Mammary epithelial cell (primary cell): ENCODE measurements at regions of chr17 and their contacts with region 1.

Region 1: DNA sequence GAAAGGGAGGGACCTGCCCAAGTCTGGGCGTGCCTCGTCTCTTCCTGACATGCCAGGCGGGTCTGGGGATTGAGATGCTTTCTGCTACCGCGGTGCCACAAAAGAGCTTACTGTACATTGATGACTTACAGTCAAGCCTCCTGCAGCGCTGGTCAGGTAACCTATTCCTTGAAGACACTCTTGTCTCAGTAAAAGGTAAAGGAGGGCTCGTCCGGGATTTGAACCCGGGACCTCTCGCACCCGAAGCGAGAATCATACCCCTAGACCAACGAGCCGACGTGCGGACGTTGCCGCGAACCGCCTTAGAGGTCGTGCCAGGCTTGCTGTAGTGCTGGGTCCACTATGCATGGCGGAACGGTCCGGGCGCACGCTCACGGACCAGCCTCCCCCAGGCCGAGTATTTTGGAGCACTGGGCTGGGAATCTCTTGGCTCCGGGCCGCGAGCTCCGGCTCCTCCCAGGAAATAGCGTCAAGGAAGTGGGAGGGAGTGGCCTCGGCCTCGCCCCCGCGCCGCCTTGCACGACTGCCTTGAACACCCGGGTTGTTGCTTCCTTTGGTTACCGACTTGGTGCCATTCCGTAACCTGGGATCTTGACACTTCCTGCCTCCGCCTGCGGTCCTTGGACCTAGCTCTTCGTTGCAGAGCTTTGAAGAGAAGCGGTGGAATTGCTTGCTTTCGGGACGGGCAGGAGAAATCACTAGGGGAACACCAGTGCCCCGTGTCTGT is 12.4 kb upstream of the AURKB start:
- DNase-seq: peak; percentile 96
- H3K4me3 ChIP-seq: peak overlapping the region; percentile 53 to 74 (median 60)
- H3K27ac ChIP-seq: peak overlapping the region; percentile 74
- H3K4me1 ChIP-seq: peaks cover 25% of the 10 kb centered on the region
- H3K27me3 ChIP-seq: no peaks in the 10 kb centered on the region
- CTCF ChIP-seq: no peak

Region 2: GRCh38 chr17:8073627-8074484 is 148.9 kb before region 1 on chr17:
- CTCF ChIA-PET with region 1: no interaction called
- dilution Hi-C with region 1: no loop called
- in situ Hi-C with region 1: no loop called
- intact Hi-C with region 1: loop called (anchors 5 kb)
- DNase-seq: peak; percentile 62
- H3K4me3 ChIP-seq: peak overlapping the region in 2 of 3 experiments; percentile 31 to 41
- H3K27ac ChIP-seq: no peak overlapping the region
- H3K4me1 ChIP-seq: peaks cover 15% of the 10 kb centered on the region
- H3K27me3 ChIP-seq: peaks cover 7% of the 10 kb centered on the region
- CTCF ChIP-seq: peak; percentile 84 to 95

Region 3: DNA sequence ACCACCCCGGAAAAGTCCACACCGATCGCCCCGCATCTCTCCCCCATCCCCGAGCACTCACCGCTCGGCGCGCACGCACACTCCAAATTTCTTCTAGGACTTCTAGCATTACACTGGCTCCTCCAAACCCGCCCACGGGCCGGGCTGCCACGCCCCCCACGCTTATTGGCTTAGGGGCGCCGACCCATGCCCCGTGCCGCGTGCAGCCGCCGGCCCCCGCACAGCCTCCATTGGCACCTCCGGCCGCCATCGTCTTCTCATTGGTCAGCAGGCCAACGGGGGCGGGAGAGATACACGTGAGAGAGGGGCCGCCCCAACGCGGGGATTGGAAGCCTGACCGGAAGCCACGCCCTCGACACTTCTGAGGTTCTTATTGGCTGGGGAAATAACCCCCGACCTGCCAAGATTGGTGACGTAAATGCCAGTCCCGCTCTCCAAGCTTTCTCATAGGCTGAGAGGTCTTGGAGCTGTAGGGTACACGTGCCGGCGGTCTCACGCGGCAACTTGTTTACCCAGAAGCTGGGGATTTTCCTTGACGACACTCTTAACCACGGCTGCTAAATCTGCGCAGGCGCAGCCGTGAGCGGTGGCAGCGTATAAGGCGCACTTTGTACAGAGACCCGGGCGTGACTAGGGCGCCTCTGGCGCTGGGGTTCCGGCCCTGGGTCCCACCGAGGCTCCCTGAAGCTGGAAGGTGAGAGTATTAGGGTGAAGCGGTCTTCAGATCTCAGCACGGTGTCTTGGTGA is 66.4 kb before region 1 on chr17:
- CTCF ChIA-PET with region 1: no interaction called
- dilution Hi-C with region 1: no loop called
- in situ Hi-C with region 1: no loop called
- intact Hi-C with region 1: loop called (anchors 1 kb)
- DNase-seq: peak; percentile 100
- H3K4me3 ChIP-seq: peak overlapping the region; percentile 85 to 92 (median 88)
- H3K27ac ChIP-seq: peak overlapping the region; percentile 100
- H3K4me1 ChIP-seq: peaks cover 34% of the 10 kb centered on the region
- H3K27me3 ChIP-seq: no peaks in the 10 kb centered on the region
- CTCF ChIP-seq: peak in 1 of 2 donors; percentile 18

Region 4: DNA sequence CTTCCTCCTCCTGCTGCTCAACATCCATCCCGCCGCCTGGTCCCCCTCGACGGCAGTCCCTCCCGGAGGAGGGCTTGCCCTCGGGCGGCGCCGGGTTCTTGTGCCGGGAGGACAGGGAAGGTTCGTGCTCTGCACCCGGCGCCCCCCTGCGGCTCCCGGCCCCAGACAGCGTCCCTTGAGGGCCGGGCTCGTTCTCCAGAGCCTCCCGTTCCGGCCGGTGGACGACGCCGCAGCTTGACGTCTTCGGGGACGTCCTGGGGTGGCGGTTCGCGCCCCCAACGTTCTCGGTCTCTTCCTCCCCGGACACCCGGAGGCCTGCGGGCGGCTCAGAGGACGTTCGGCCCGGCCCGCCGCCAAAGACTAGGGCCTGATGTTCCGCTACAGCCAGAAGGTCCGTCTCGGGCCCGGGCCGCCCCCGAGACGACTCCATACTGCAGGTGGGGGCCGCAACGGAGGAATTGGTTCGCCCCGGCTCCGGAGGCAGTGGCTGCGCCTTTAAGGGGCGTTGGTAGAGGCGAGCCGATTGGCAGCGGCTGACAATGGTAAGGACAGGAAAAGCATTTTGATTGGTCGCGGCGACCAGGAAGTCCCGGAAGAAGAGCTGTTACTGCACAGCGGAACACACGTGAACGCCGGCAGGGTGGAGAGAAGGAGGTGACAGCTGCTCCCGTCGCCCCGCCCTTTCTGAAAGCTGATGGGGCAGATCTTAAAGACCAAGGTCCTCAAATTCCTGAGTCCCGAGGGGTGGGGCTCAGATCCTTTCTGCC is 32.9 kb before region 1 on chr17 and contains the start of gene BORCS6:
- CTCF ChIA-PET with region 1: interaction called, 5 read pairs
- dilution Hi-C with region 1: no loop called
- in situ Hi-C with region 1: loop called in 1 of 2 experiments (anchors 5 kb)
- intact Hi-C with region 1: loop called (anchors 1 kb)
- DNase-seq: peak; percentile 97
- H3K4me3 ChIP-seq: peak within 1 kb of the TSS; percentile 62 to 85 (median 80)
- H3K27ac ChIP-seq: peak within 1 kb of the TSS; percentile 52
- H3K4me1 ChIP-seq: peaks cover 31% of the 10 kb centered on the region
- H3K27me3 ChIP-seq: no peaks in the 10 kb centered on the region
- CTCF ChIP-seq: peak in 1 of 2 donors; percentile 9
- total RNA-seq, gene BORCS6: 4.9 to 8.8 TPM

Region 5: GRCh38 chr17:8248751-8249607 is 26.2 kb after region 1 on chr17 and contains the start of gene PFAS:
- CTCF ChIA-PET with region 1: no interaction called
- dilution Hi-C with region 1: no loop called
- in situ Hi-C with region 1: no loop called
- intact Hi-C with region 1: loop called (anchors 1 kb)
- DNase-seq: peak; percentile 93
- H3K4me3 ChIP-seq: peak within 1 kb of the TSS; percentile 82 to 96 (median 89)
- H3K27ac ChIP-seq: peak within 1 kb of the TSS; percentile 92
- H3K4me1 ChIP-seq: peaks cover 12% of the 10 kb centered on the region
- H3K27me3 ChIP-seq: no peaks in the 10 kb centered on the region
- CTCF ChIP-seq: no peak
- total RNA-seq, gene PFAS: 8.5 to 31.2 TPM